ENCODE measurements at regions of chr1 and their contacts with region 1.

Region 1: DNA sequence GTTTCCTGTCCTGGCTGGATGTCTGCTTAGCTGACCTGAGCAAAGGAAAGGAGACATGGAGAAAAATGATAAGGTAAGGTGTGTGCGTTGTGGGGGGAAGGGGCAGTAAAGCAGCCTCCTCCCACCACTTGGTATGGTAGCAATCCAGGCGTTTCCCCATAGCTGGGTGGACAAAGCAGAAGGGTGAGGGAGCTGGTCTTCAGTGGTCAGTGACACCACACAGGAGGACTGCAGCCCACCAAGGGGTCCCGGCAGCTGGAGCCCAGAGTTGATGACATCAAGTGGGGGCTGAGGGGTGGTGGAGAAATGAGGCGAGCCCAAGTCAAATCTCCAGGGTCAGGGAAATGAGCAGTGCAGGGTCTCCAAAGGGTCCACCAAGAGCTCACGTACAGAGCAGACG is 69.3 kb upstream of the LRRN2 start:
- DNase-seq: no peak
- H3K4me3 ChIP-seq: no peak overlapping the region
- H3K27ac ChIP-seq: no peak overlapping the region
- H3K4me1 ChIP-seq: peaks cover 0 to 12% (median 8%) of the 10 kb centered on the region in 4 donors
- H3K27me3 ChIP-seq: no peaks in the 10 kb centered on the region
- CTCF ChIP-seq: no peak
- EP300 ChIP-seq: no peak
- POLR2A ChIP-seq: no peak

Region 2: GRCh38 chr1:204736836-204737387 is 17.9 kb before region 1 on chr1:
- in situ Hi-C with region 1: no loop called
- intact Hi-C with region 1: loop called (anchors 1 kb)
- DNase-seq: no peak
- H3K4me3 ChIP-seq: no peak overlapping the region
- H3K27ac ChIP-seq: no peak overlapping the region
- H3K4me1 ChIP-seq: no peaks in the 10 kb centered on the region
- H3K27me3 ChIP-seq: peaks cover 29% of the 10 kb centered on the region
- CTCF ChIP-seq: no peak
- EP300 ChIP-seq: no peak
- POLR2A ChIP-seq: no peak

Region 3: DNA sequence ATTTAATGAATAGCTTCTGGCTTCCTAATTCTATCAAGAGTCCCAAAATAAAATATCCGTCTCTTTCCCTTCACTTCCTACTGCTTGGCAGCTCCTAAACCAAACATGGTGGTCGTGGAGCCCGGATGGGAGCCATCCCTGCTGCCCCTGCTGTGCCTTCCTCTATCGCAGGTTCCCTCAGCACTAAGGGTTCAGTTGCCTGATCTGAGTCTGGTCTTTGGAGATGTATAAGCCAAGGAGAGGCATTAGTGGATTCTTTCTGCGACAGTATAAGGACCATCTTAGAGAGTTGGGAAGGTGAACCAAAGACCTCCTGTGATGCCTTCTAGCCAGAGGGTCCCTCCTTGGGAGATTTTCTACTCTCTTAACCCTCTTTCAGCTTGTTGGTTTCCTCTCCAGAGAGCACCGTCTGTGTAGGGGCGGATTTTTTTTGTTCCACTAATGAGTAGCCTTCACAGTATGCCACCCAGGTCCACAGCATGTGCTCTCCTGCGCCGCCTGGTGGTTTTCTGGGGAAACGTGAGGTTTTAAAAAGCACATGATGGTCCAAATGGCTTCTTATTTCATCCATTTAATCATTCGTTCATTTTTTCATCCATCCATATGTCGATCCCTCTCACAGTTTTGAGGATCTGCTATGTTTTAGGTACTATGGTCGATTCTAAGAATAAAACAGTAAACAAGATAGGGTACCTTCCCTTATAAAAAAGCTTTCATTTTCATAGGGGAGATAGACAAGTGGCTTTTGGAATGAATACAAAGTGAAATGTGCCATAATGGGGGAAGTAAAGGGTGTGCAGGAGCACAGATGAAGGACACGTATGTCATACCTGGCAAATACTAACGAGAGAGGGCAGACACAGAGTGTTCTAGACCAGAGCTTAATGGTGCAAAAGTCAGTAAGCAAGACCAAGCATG is 186.9 kb after region 1 on chr1:
- in situ Hi-C with region 1: no loop called
- intact Hi-C with region 1: no loop called
- DNase-seq: peak; percentile 73
- H3K4me3 ChIP-seq: no peak overlapping the region
- H3K27ac ChIP-seq: no peak overlapping the region
- H3K4me1 ChIP-seq: peaks cover 0 to 4% (median 0%) of the 10 kb centered on the region in 4 donors
- H3K27me3 ChIP-seq: no peaks in the 10 kb centered on the region
- CTCF ChIP-seq: peak; percentile 89 to 96 (median 91)
- EP300 ChIP-seq: no peak
- POLR2A ChIP-seq: no peak

Region 4: DNA sequence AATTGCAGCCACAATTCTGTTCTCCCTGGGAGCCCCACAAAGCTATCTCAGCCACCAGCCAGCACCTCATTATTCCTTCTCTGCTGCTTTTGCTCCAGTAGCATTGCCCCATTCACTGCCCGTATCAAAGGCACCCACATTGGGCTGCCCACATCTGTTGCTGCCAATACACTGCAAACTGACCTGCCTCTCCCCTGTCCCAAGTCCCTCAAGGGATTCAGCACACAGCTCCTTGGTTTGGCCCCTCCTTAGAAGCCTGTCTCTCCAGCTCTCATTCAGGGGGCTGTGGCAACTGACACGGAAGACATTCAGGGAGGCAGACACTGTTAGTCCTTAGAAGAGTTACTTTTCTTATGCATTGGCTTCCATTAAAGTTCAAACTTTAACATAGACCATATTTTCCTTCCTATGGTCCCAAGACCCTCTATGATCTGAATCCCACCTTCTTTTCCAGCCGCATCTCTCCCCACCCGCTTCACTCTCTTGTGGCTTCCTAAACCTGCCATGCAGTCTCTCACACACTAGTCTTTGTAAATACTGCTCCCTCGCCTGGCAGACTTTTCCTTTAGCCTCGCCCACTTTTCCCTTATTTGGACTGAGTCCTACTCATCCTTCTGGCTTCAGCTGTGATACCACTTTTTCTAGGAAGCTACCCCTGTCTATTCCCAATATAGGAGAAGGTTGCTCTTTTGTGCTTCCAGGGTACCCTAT is 621.2 kb after region 1 on chr1:
- in situ Hi-C with region 1: no loop called
- intact Hi-C with region 1: no loop called
- DNase-seq: peak; percentile 34
- H3K4me3 ChIP-seq: no peak overlapping the region
- H3K27ac ChIP-seq: no peak overlapping the region
- H3K4me1 ChIP-seq: peaks cover 0 to 14% (median 5%) of the 10 kb centered on the region in 4 donors
- H3K27me3 ChIP-seq: peaks cover 10% of the 10 kb centered on the region
- CTCF ChIP-seq: no peak
- EP300 ChIP-seq: no peak
- POLR2A ChIP-seq: no peak